ENCODE measurements at regions of chr4 and their contacts with region 1.

Region 1: DNA sequence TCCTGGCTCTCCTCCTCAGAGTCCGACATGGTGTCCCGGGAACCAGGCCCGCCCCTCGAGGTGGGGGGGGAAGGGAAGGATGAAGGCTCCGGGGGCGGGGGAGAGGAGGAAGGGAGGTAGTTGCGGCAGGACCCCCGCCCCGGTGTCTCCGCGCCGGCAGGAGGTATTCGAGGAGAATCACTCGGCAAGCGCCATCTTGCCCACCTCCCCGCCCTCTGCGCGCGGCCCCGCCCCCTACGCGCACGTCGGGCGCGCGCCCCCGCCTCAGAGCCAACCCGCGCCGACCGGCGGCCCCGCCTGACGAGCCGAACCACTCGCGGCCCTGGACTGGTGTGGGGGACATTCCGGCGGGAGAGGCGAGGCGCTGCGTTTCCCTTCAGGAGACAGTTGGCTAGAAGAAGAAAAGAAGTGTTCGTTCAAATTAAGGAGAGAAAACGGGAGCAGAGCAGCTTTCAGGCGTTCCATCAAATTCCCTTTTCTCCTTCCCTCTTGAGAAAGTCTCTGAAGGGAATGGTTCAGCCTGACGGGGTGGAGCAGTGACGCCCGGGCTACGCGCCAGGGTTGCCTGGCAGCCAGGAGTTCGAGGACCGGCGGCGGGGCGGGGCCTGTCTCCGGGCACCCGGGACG is at the start of gene RAB28:
- DNase-seq: peak; percentile 95 to 97 (median 96)
- ATAC-seq: peak; percentile 98 to 99 (median 98)
- H3K4me3 ChIP-seq: peak within 1 kb of the TSS; percentile 62 to 98 (median 81)
- H3K27ac ChIP-seq: peak within 1 kb of the TSS; percentile 83 to 99 (median 96)
- H3K4me1 ChIP-seq: peaks cover 0 to 35% (median 19%) of the 10 kb centered on the region in 12 donors
- H3K27me3 ChIP-seq: peaks cover 0 to 16% (median 4%) of the 10 kb centered on the region in 9 donors
- CTCF ChIP-seq: no peak
- POLR2A ChIP-seq: peak in 1 of 2 donors; percentile 56
- total RNA-seq, gene RAB28: 15.5 to 31.1 (median 18.6) TPM

Region 2: DNA sequence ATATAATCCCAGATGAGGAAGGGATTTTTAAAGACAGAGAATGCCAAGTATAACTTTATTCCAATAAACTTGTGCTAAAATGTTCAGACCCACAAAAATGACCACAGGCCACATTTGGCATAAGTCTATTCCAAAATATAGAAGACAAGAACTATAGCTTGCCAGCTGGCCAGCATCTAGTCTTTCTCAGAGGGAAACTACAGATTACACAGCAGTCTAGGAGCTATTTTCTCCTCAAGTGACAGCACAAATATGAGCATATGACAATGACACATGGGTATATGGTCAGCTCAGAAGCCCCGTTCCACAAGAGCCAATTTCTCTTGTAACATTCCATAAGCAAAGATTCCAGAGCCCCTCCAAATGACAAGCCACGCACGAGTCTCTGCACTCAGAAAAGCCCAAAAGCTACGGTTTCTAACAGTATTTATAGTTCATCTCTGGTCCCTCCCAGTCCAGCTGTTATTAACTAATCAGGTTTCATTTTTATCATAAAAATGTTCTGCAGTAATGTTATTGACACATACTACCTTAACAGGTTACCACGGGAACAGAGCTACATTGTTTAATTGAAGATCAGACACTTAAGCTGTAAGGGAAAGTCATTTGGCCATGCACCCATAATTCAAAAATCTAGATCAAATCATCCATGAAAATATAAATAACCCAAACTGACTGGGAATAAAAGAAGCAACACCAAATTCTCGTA is 70.4 kb before region 1 on chr4:
- intact Hi-C with region 1: loop called in 3 of 10 experiments (anchors 5 kb)
- DNase-seq: no peak
- ATAC-seq: peak; percentile 66 to 86 (median 78)
- H3K4me3 ChIP-seq: peak overlapping the region in 5 of 12 donors; percentile 7 to 28 (median 11)
- H3K27ac ChIP-seq: peak overlapping the region in 10 of 12 donors; percentile 28 to 79 (median 66)
- H3K4me1 ChIP-seq: peaks cover 0 to 52% (median 27%) of the 10 kb centered on the region in 12 donors
- H3K27me3 ChIP-seq: no peaks in the 10 kb centered on the region
- CTCF ChIP-seq: no peak
- POLR2A ChIP-seq: no peak

Region 3: GRCh38 chr4:13535708-13536361 is 51.6 kb after region 1 on chr4:
- intact Hi-C with region 1: loop called in 1 of 10 experiments (anchors 5 kb)
- DNase-seq: no peak
- ATAC-seq: no peak
- H3K4me3 ChIP-seq: no peak overlapping the region
- H3K27ac ChIP-seq: no peak overlapping the region
- H3K4me1 ChIP-seq: peaks cover 0 to 37% (median 13%) of the 10 kb centered on the region in 12 donors
- H3K27me3 ChIP-seq: peaks cover 80 to 100% (median 98%) of the 10 kb centered on the region in 9 donors
- CTCF ChIP-seq: no peak
- POLR2A ChIP-seq: no peak

Region 4: DNA sequence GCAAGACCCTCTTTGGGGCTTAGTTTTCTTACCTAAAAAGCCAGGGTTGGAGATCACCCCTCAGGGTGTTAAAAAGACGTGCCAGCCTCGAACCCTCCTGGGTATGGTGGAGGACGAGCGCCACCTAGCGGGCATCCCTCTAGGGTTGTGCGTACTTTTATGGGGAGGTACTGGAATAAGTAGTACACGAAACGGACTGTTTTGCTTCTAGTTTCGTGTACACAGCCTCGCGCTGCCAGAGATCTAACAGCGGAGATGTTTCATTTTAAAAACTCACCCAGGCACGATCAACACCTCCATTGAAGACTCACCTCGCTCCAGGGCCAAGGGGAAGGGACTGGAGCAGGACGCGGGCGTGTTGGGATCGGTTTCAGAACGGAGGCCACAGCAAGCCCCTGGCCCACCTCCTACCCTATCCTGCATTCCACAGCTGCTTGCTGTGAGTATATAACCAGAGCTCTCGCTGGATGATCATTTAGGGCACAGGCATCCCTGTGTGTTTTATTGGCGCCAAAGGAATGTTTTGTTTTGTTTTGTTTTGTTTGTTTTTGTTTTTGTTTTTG is 64.8 kb after region 1 on chr4:
- intact Hi-C with region 1: no loop called
- DNase-seq: peak; percentile 61 to 89 (median 74)
- ATAC-seq: peak; percentile 61 to 85 (median 82)
- H3K4me3 ChIP-seq: peak overlapping the region in 9 of 12 donors; percentile 10 to 43 (median 22)
- H3K27ac ChIP-seq: no peak overlapping the region
- H3K4me1 ChIP-seq: peaks cover 0 to 37% (median 24%) of the 10 kb centered on the region in 12 donors
- H3K27me3 ChIP-seq: peaks cover 40 to 88% (median 69%) of the 10 kb centered on the region in 9 donors
- CTCF ChIP-seq: peak; percentile 73 to 96 (median 90)
- POLR2A ChIP-seq: no peak

Region 5: DNA sequence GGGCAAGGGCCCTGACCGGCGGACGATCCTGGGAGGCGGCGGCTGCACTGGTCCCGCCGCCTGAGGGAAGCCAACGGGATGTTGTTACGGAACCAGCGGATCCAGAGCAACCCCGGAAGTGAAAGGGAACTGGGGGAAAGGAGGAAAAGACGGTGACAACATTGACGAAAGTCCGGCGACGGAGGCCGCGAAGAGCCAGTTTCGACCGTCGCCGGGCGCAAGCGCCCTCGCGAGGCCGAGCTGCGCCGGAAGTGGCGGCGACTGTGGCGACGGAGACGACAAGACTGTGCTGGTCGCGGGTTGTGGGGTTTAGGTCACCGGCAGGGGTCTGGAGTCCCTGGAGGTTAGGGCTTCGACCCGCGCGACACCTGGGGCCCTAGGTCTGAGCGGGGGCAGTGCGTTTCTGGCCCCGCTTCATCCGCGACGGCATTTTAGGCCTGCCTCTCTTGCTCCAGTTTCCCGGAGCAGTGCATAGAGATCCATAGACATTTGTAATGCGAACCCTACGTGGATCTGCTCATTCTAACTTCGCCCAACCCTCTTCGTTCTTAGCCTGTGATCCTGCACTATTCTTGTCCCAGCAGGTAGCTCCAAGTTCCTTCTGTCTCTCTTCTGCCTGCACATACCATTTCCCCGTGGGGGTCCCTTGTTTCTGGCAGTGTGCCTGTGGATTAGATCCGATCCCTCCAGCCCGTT is 143.5 kb after region 1 on chr4 and contains the start of gene BOD1L1:
- intact Hi-C with region 1: loop called in 4 of 10 experiments (anchors 10 kb)
- DNase-seq: peak; percentile 90 to 94 (median 92)
- ATAC-seq: peak; percentile 86 to 98 (median 97)
- H3K4me3 ChIP-seq: peak within 1 kb of the TSS; percentile 45 to 99 (median 85)
- H3K27ac ChIP-seq: peak within 1 kb of the TSS; percentile 84 to 99 (median 91)
- H3K4me1 ChIP-seq: peaks cover 4 to 32% (median 27%) of the 10 kb centered on the region in 12 donors
- H3K27me3 ChIP-seq: no peaks in the 10 kb centered on the region
- CTCF ChIP-seq: peak in 10 of 12 donors; percentile 27 to 67 (median 47)
- POLR2A ChIP-seq: peak in 1 of 2 donors; percentile 71
- total RNA-seq, gene BOD1L1: 13.9 to 29.2 (median 22.9) TPM